RWPE1 (cell line): ENCODE measurements at regions of chr11 and their contacts with region 1.

Region 1: DNA sequence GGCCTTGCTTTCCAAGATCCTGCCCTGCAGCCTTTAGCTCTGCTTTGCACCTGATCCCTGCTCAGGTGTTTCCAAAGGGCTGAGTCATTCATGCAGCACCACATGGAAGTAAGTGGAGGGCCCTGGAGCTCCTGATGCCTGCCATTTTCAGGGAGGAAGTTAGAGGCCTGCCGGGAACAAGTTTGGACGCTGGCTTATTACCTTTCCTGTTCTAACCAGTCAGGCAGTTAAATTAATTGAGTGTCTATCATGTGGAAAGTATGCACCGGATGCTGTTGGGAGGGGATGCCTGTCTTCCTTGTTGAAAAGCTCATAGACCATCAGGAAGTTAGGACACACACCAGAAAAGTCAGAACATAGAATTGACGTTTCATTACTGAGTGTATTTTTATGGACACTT is 73.7 kb upstream of the PLET1 start:
- DNase-seq: peak; percentile 85
- H3K27ac ChIP-seq: peak overlapping the region; percentile 71
- CTCF ChIP-seq: no peak

Region 2: GRCh38 chr11:112229746-112230433 is 104.5 kb before region 1 on chr11:
- CTCF ChIA-PET with region 1: no interaction called
- POLR2A ChIA-PET with region 1: no interaction called
- DNase-seq: no peak
- H3K27ac ChIP-seq: no peak overlapping the region
- CTCF ChIP-seq: no peak

Region 3: GRCh38 chr11:112315057-112315720 is 19.2 kb before region 1 on chr11:
- CTCF ChIA-PET with region 1: no interaction called
- POLR2A ChIA-PET with region 1: interaction called, 10 read pairs
- DNase-seq: no peak
- H3K27ac ChIP-seq: no peak overlapping the region
- CTCF ChIP-seq: no peak

Region 4: GRCh38 chr11:112364962-112365481 is 30.6 kb after region 1 on chr11:
- CTCF ChIA-PET with region 1: no interaction called
- POLR2A ChIA-PET with region 1: no interaction called
- DNase-seq: peak; percentile 46
- H3K27ac ChIP-seq: no peak overlapping the region
- CTCF ChIP-seq: no peak